Sigmoid colon (tissue), 7 donors: ENCODE measurements at regions of chr11 and their contacts with region 1.

Region 1: GRCh38 chr11:44627911-44628729 is 62.7 kb downstream of the CD82 start:
- DNase-seq: peak; percentile 95
- H3K4me3 ChIP-seq: no peak overlapping the region
- H3K27ac ChIP-seq: peak overlapping the region; percentile 70 to 84 (median 80)
- H3K4me1 ChIP-seq: peaks cover 0 to 68% (median 61%) of the 10 kb centered on the region in 4 donors
- H3K27me3 ChIP-seq: no peaks in the 10 kb centered on the region
- CTCF ChIP-seq: no peak
- EP300 ChIP-seq: peak in 1 of 4 donors; percentile 3
- POLR2A ChIP-seq: no peak

Region 2: DNA sequence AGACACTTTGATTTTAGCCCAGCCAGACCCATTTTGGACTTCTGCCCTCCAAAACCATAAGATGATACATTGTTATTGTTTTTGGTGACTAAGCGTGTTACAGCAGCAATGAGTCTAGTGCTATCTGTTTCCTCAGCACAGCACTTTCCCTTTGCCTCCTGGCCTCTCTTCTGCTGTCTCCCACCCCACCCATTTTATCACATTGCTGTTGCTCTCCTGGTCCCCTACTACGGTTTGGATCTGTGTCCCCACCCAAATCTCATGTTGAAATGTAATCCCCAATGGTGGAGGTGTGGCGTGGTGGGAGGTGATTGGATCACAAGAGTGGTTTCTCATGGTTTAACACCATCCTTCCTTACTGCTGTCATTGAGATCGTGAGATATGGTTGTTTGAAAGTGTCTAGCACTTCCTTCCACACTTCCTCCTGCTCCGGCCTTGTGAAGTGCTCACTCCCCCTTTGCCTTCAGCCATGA is 122.5 kb before region 1 on chr11:
- intact Hi-C with region 1: no loop called
- DNase-seq: no peak
- H3K4me3 ChIP-seq: no peak overlapping the region
- H3K27ac ChIP-seq: no peak overlapping the region
- H3K4me1 ChIP-seq: no peaks in the 10 kb centered on the region
- H3K27me3 ChIP-seq: peaks cover 0 to 3% (median 0%) of the 10 kb centered on the region in 3 donors
- CTCF ChIP-seq: no peak
- EP300 ChIP-seq: no peak
- POLR2A ChIP-seq: no peak

Region 3: GRCh38 chr11:44702889-44703288 is 74.8 kb after region 1 on chr11:
- intact Hi-C with region 1: loop called (anchors 5 kb)
- DNase-seq: peak; percentile 93
- H3K4me3 ChIP-seq: no peak overlapping the region
- H3K27ac ChIP-seq: peak overlapping the region in 3 of 4 donors; percentile 69 to 81 (median 74)
- H3K4me1 ChIP-seq: peaks cover 0 to 34% (median 33%) of the 10 kb centered on the region in 4 donors
- H3K27me3 ChIP-seq: no peaks in the 10 kb centered on the region
- CTCF ChIP-seq: no peak
- EP300 ChIP-seq: peak in 2 of 4 donors; percentile 22 to 34
- POLR2A ChIP-seq: no peak

Region 4: GRCh38 chr11:44727373-44728287 is 99.5 kb after region 1 on chr11:
- intact Hi-C with region 1: loop called (anchors 2 kb)
- DNase-seq: peak; percentile 93
- H3K4me3 ChIP-seq: peak overlapping the region; percentile 72 to 90 (median 82)
- H3K27ac ChIP-seq: peak overlapping the region; percentile 87 to 95 (median 89)
- H3K4me1 ChIP-seq: peaks cover 4 to 56% (median 51%) of the 10 kb centered on the region in 4 donors
- H3K27me3 ChIP-seq: no peaks in the 10 kb centered on the region
- CTCF ChIP-seq: peak; percentile 86 to 96 (median 92)
- EP300 ChIP-seq: no peak
- POLR2A ChIP-seq: peak in 1 of 2 donors; percentile 12

Region 5: DNA sequence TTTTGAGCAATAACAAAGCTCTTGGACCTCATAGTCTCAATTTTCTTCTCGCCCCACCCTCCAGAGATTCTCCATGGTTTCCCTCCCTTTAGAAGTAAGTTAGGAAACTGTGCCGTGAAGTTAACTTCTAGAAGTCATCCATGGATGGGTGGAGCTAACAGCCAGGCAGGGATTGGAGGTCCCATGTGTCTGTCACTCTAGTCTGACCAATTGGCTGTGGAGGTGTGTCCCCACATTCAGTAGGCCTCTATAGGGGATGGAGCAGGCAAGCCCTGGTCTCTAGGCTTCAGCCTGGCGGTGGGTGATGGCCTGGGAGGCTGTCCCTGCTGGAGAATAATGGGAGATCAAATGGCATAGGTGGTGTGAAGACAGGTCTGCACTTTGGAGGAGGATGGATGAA is 271.8 kb after region 1 on chr11:
- intact Hi-C with region 1: loop called (anchors 5 kb)
- DNase-seq: no peak
- H3K4me3 ChIP-seq: no peak overlapping the region
- H3K27ac ChIP-seq: no peak overlapping the region
- H3K4me1 ChIP-seq: peaks cover 0 to 19% (median 5%) of the 10 kb centered on the region in 4 donors
- H3K27me3 ChIP-seq: no peaks in the 10 kb centered on the region
- CTCF ChIP-seq: no peak
- EP300 ChIP-seq: no peak
- POLR2A ChIP-seq: no peak